ENCODE measurements at regions of chr11 and their contacts with region 1.

Region 1: GRCh38 chr11:126211235-126212088 is at the starts of genes FAM118B and RPUSD4:
- DNase-seq: peak; percentile 99
- ATAC-seq: peak; percentile 93
- H3K4me3 Mint-ChIP-seq: peak within 1 kb of the TSS; percentile 99
- H3K27ac Mint-ChIP-seq: peak within 1 kb of the TSS; percentile 97
- H3K4me1 Mint-ChIP-seq: peaks cover 28% of the 10 kb centered on the region
- H3K27me3 Mint-ChIP-seq: no peaks in the 10 kb centered on the region
- CTCF ChIP-seq: no peak
- total RNA-seq, gene FAM118B: 8.7 and 11.7 TPM in 2 replicates
- total RNA-seq, gene RPUSD4: 48.8 and 58.2 TPM in 2 replicates

Region 2: GRCh38 chr11:125070699-125071254 is 1140.7 kb before region 1 on chr11:
- CTCF ChIA-PET with region 1: no interaction called
- POLR2A ChIA-PET with region 1: no interaction called
- intact Hi-C with region 1: loop called (anchors 5 kb)
- DNase-seq: no peak
- ATAC-seq: peak; percentile 69
- H3K4me3 Mint-ChIP-seq: peak overlapping the region; percentile 40
- H3K27ac Mint-ChIP-seq: peak overlapping the region; percentile 82
- H3K4me1 Mint-ChIP-seq: peaks cover 71% of the 10 kb centered on the region
- H3K27me3 Mint-ChIP-seq: peaks cover 2% of the 10 kb centered on the region
- CTCF ChIP-seq: no peak

Region 3: GRCh38 chr11:125592305-125593112 is 619.0 kb before region 1 on chr11 and contains the start of gene STT3A:
- CTCF ChIA-PET with region 1: no interaction called
- POLR2A ChIA-PET with region 1: no interaction called
- intact Hi-C with region 1: loop called (anchors 1 kb)
- DNase-seq: peak; percentile 90
- ATAC-seq: peak; percentile 92
- H3K4me3 Mint-ChIP-seq: peak within 1 kb of the TSS; percentile 95
- H3K27ac Mint-ChIP-seq: peak within 1 kb of the TSS; percentile 99
- H3K4me1 Mint-ChIP-seq: peaks cover 58% of the 10 kb centered on the region
- H3K27me3 Mint-ChIP-seq: no peaks in the 10 kb centered on the region
- CTCF ChIP-seq: no peak
- total RNA-seq, gene STT3A: 79.4 and 86.5 TPM in 2 replicates

Region 4: DNA sequence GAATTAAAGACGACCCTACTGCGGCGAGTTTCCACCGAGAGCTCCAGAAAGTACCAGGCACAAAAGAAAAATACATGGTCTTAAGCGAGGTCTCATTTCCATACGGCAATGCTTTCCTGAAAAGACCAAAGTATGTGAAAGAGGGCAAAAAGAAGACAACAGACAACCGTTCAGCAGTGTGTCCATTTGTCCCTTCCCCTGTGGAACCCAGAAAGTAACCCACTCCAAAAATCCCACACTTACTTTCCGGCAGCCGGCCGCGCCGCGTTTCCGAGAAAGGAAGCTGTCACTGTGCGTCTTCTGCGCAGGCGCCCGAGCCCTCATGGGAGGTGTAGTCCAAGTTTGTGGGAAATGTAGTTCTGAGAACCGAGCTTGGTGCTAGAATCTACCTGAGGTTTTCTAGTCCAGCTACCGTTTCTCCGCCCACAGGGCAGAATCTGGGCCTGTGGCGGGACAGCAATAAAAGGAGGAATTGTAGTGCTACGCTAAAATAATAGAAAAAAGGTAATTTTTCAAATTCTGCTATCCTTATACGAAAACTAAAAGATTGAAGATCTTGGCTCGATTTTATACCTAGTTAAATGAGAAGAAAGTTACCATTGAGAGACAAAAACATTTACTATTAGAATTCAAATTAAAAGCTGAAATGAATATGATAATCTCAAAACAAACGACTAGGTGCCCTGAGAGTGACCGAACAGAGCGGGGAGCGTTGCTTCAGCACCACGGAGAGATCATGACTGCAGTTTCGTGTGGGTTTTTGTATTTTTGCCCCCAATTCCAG is 308.3 kb before region 1 on chr11 and contains the start of gene PUS3:
- CTCF ChIA-PET with region 1: no interaction called
- POLR2A ChIA-PET with region 1: interaction called, 3 read pairs
- intact Hi-C with region 1: loop called (anchors 1 kb)
- DNase-seq: peak; percentile 77
- ATAC-seq: peak; percentile 96
- H3K4me3 Mint-ChIP-seq: peak within 1 kb of the TSS; percentile 94
- H3K27ac Mint-ChIP-seq: peak within 1 kb of the TSS; percentile 88
- H3K4me1 Mint-ChIP-seq: peaks cover 31% of the 10 kb centered on the region
- H3K27me3 Mint-ChIP-seq: peaks cover 22% of the 10 kb centered on the region
- CTCF ChIP-seq: no peak
- total RNA-seq, gene PUS3: 10.2 and 13.2 TPM in 2 replicates

Region 5: GRCh38 chr11:126268708-126269579 is 57.5 kb after region 1 on chr11 and contains the starts of genes FOXRED1 and SRPRA:
- CTCF ChIA-PET with region 1: no interaction called
- POLR2A ChIA-PET with region 1: interaction called, 21 read pairs
- intact Hi-C with region 1: loop called (anchors 1 kb)
- DNase-seq: peak; percentile 99
- ATAC-seq: peak; percentile 98
- H3K4me3 Mint-ChIP-seq: peak within 1 kb of the TSS; percentile 95
- H3K27ac Mint-ChIP-seq: peak within 1 kb of the TSS; percentile 95
- H3K4me1 Mint-ChIP-seq: peaks cover 33% of the 10 kb centered on the region
- H3K27me3 Mint-ChIP-seq: no peaks in the 10 kb centered on the region
- CTCF ChIP-seq: no peak
- total RNA-seq, gene FOXRED1: 39.1 and 44.9 TPM in 2 replicates
- total RNA-seq, gene SRPRA: 121 and 128 TPM in 2 replicates

Region 6: DNA sequence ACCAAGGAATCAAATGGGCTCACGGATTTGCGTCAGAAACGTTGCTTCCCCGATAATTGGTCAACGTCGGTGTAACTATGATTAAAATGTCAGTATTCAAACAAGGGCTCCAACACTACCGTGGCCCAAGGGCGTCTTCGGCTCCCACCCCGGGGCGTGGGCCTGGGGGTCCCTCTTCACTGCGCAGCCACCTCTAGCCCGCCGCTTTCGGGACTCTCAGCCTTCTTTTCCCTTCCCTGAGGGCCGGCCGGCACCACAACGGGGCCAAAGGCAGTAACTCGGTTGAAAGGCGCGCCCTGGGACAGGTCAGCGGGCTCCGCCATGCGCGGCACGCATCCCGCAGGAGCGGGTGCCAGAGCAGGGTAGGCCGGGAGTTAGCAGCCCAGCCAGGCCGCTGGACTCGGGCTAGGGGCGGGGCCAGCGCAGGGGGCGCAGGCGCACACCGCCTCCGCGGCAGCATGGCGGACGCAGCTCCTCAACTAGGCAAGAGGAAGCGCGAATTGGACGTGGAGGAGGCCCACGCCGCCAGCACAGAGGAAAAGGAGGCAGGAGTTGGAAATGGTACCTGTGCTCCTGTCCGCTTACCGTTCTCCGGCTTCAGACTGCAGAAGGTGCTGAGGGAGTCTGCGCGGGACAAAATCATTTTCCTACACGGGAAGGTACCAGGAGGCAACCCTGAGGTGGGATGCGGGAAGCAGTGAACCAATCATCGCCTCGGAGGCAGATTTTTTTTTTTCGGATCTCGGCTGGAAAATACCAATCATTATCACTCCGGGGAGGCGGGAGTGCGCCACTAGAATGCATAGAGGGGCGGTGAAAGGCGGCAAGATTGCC is 92.4 kb after region 1 on chr11 and contains the start of gene DCPS:
- CTCF ChIA-PET with region 1: no interaction called
- POLR2A ChIA-PET with region 1: interaction called, 15 read pairs
- intact Hi-C with region 1: loop called (anchors 1 kb)
- DNase-seq: peak; percentile 92
- ATAC-seq: peak; percentile 98
- H3K4me3 Mint-ChIP-seq: peak within 1 kb of the TSS; percentile 93
- H3K27ac Mint-ChIP-seq: peak within 1 kb of the TSS; percentile 92
- H3K4me1 Mint-ChIP-seq: peaks cover 38% of the 10 kb centered on the region
- H3K27me3 Mint-ChIP-seq: no peaks in the 10 kb centered on the region
- CTCF ChIP-seq: no peak
- total RNA-seq, gene DCPS: 37.6 and 39.6 TPM in 2 replicates

Region 7: GRCh38 chr11:126416542-126417090 is 205.2 kb after region 1 on chr11:
- CTCF ChIA-PET with region 1: no interaction called
- POLR2A ChIA-PET with region 1: no interaction called
- intact Hi-C with region 1: no loop called
- DNase-seq: peak; percentile 55
- ATAC-seq: peak; percentile 99
- H3K4me3 Mint-ChIP-seq: peak overlapping the region; percentile 67
- H3K27ac Mint-ChIP-seq: no peak overlapping the region
- H3K4me1 Mint-ChIP-seq: peaks cover 26% of the 10 kb centered on the region
- H3K27me3 Mint-ChIP-seq: no peaks in the 10 kb centered on the region
- CTCF ChIP-seq: no peak

Measured in activated B cell treated with CpG ODN at 0.5 μM for 24 hours (primary cell).